Endothelial cell of umbilical vein (primary cell): ENCODE measurements at regions of chr20 and their contacts with region 1.

Region 1: DNA sequence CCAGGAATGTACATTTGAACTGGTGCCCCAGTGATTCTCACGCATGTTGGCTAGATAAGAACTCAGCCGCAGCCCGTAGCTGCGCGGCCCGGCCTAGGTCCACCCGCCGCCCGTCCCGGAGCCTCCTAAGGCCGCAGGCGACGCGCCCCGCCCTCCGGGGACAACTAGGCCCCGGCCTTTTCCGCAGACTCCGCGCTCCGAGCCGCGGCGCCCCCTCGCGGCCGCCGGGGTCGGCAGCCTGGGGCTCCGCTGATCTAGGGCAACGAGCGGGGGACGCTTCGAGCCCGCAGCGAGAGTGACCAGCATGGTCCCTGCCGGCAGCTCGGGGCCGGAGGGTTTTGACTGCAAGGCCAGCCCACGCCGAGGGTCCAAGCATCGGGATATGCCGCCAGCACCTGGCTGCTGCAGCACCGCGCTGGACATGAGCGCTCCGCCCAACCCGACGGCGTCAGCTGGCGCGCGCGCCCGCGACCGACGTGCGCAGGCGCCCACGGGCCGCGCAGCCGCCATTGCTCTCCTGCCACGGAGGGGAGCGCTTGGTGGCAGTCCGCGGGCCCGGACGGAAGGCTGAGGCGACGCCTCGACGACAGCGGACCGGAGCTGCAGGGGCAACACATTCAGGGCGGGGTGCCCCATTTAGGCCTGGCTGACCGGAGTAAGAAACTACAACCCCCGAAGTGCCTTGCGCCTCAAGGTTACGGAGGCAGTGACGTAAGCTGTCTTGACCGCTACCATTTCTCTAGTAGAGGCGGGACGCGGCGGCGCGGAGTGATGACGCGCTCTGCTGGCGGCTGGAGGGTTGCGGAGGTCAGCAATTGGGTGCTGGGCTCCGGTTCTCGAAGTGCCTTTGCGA is at the start of gene AP5S1:
- DNase-seq: peak; percentile 96
- H3K4me3 ChIP-seq: peak within 1 kb of the TSS; percentile 50 to 86 (median 55)
- H3K27ac ChIP-seq: peak within 1 kb of the TSS; percentile 84
- H3K4me1 ChIP-seq: peaks cover 7% of the 10 kb centered on the region
- H3K27me3 ChIP-seq: no peaks in the 10 kb centered on the region
- CTCF ChIP-seq: peak; percentile 92 to 100
- POLR2A ChIP-seq: peak; percentile 81
- total RNA-seq, gene AP5S1: 19.2 and 22.0 TPM in 2 replicates

Region 2: GRCh38 chr20:3727401-3728021 is 92.8 kb before region 1 on chr20:
- CTCF ChIA-PET with region 1: no interaction called
- POLR2A ChIA-PET with region 1: no interaction called
- dilution Hi-C with region 1: no loop called
- intact Hi-C with region 1: no loop called
- DNase-seq: no peak
- H3K4me3 ChIP-seq: no peak overlapping the region
- H3K27ac ChIP-seq: no peak overlapping the region
- H3K4me1 ChIP-seq: no peaks in the 10 kb centered on the region
- H3K27me3 ChIP-seq: peaks cover 7 to 10% of the 10 kb centered on the region in 2 experiments
- CTCF ChIP-seq: no peak
- POLR2A ChIP-seq: no peak

Region 3: GRCh38 chr20:3753098-3753980 is 66.9 kb before region 1 on chr20:
- CTCF ChIA-PET with region 1: interaction called, 6 read pairs
- POLR2A ChIA-PET with region 1: no interaction called
- dilution Hi-C with region 1: no loop called
- intact Hi-C with region 1: loop called (anchors 1 kb)
- DNase-seq: peak; percentile 66
- H3K4me3 ChIP-seq: no peak overlapping the region
- H3K27ac ChIP-seq: no peak overlapping the region
- H3K4me1 ChIP-seq: no peaks in the 10 kb centered on the region
- H3K27me3 ChIP-seq: no peaks in the 10 kb centered on the region
- CTCF ChIP-seq: peak; percentile 79 to 89
- POLR2A ChIP-seq: peak; percentile 55

Region 4: GRCh38 chr20:3781153-3781910 is 38.9 kb before region 1 on chr20 and contains the start of gene SPEF1:
- CTCF ChIA-PET with region 1: interaction called, 214 read pairs
- POLR2A ChIA-PET with region 1: no interaction called
- dilution Hi-C with region 1: no loop called
- intact Hi-C with region 1: loop called (anchors 1 kb)
- DNase-seq: peak; percentile 90
- H3K4me3 ChIP-seq: peak within 1 kb of the TSS in 2 of 3 experiments; percentile 3 to 17
- H3K27ac ChIP-seq: no peak within 1 kb of the TSS
- H3K4me1 ChIP-seq: peaks cover 28% of the 10 kb centered on the region
- H3K27me3 ChIP-seq: peaks cover 8 to 19% of the 10 kb centered on the region in 2 experiments
- CTCF ChIP-seq: peak; percentile 42 to 56
- POLR2A ChIP-seq: peak; percentile 68
- total RNA-seq, gene SPEF1: 0.32 and 0.44 TPM in 2 replicates

Region 5: DNA sequence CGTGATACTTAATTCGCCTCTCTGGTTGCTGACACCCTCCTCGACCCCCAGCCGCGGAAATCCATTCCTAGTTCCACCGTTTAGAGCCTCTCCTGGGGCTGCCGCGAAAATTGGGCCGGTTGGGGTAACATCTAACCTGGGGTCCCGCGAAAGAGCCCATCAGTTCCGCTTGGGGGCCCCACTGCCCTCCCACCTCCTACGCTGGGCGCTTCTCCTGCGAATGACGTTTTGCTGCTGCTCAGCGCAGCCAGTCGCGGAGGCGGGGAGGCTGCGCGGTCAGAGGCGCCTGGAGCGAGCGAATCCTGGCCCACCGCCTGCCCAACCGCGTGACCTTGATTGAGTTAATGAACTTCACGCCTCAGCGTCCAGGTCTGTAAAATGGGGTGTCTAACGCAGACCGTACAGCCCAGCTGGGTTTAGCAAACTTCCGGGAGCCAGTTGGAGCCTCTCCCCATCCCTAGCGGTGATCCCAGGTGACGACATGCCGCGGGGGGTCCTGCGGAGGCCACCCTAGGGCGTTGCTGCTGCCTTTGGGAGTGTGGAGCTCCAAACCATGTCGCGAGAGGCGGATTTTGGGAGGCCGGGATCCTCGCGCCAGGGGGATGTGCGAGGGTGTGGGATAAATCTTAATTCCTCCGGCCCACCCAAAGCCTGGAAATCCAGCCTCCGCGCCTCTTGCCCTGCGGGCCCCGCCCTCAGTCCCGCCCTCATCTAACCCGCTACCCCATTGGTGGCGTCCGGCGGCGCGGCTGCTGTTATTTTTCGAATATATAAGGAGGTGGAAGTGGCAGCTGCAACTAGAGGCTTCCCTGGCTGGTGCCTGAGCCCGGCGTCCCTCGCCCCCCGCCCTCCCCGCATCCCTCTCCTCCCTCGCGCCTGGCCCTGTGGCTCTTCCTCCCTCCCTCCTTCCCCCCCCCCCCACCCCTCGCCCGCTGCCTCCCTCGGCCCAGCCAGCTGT is 24.5 kb before region 1 on chr20 and contains the start of gene CDC25B:
- CTCF ChIA-PET with region 1: interaction called, 29 read pairs
- POLR2A ChIA-PET with region 1: interaction called, 3 read pairs
- dilution Hi-C with region 1: no loop called
- intact Hi-C with region 1: loop called (anchors 1 kb)
- DNase-seq: peak; percentile 88
- H3K4me3 ChIP-seq: peak within 1 kb of the TSS; percentile 66 to 90 (median 70)
- H3K27ac ChIP-seq: peak within 1 kb of the TSS; percentile 84
- H3K4me1 ChIP-seq: peaks cover 20% of the 10 kb centered on the region
- H3K27me3 ChIP-seq: no peaks in the 10 kb centered on the region
- CTCF ChIP-seq: peak in 1 of 2 donors; percentile 49
- POLR2A ChIP-seq: peak; percentile 61
- total RNA-seq, gene CDC25B: 62.2 and 76.5 TPM in 2 replicates

Region 6: DNA sequence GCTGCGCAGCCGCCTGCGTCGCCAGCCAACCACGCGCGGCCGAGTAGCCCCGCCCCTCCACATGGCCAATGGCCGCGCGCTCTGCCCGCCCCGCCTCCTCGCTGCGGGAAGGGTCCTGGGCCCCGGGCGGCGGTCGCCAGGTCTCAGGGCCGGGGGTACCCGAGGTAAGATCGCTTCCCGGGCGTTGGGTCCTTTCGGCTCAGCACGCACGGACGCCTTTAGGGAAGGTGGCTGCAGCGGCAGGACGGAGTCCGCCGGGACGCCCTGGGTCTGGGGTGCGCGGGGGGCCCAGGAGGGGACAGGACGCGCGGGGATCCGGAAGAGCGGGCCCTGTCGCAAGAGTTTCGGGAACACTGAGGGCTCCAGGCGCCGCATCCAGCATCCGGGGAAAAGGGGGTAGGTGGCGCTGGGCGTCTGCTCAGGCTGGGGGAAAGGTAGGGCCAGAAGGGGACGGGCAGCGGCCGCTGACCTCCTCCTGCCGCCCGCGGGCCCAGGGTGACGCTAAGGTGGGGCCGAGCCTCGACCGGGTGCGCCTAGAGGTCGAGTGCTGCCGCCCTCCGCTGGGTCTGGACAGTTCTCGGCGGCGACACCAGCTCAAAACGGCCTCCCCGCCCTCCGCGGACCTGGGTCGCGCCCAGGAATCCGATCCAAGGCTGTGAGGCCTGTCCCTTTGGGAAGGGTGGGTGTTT is 26.6 kb after region 1 on chr20 and contains the start of gene MAVS:
- CTCF ChIA-PET with region 1: interaction called, 9 read pairs
- POLR2A ChIA-PET with region 1: interaction called, 4 read pairs
- dilution Hi-C with region 1: no loop called
- intact Hi-C with region 1: loop called (anchors 1 kb)
- DNase-seq: peak; percentile 84
- H3K4me3 ChIP-seq: peak within 1 kb of the TSS; percentile 78 to 92 (median 89)
- H3K27ac ChIP-seq: peak within 1 kb of the TSS; percentile 45
- H3K4me1 ChIP-seq: peaks cover 13% of the 10 kb centered on the region
- H3K27me3 ChIP-seq: no peaks in the 10 kb centered on the region
- CTCF ChIP-seq: no peak
- POLR2A ChIP-seq: peak; percentile 56
- total RNA-seq, gene MAVS: 35.1 and 40.7 TPM in 2 replicates

Region 7: DNA sequence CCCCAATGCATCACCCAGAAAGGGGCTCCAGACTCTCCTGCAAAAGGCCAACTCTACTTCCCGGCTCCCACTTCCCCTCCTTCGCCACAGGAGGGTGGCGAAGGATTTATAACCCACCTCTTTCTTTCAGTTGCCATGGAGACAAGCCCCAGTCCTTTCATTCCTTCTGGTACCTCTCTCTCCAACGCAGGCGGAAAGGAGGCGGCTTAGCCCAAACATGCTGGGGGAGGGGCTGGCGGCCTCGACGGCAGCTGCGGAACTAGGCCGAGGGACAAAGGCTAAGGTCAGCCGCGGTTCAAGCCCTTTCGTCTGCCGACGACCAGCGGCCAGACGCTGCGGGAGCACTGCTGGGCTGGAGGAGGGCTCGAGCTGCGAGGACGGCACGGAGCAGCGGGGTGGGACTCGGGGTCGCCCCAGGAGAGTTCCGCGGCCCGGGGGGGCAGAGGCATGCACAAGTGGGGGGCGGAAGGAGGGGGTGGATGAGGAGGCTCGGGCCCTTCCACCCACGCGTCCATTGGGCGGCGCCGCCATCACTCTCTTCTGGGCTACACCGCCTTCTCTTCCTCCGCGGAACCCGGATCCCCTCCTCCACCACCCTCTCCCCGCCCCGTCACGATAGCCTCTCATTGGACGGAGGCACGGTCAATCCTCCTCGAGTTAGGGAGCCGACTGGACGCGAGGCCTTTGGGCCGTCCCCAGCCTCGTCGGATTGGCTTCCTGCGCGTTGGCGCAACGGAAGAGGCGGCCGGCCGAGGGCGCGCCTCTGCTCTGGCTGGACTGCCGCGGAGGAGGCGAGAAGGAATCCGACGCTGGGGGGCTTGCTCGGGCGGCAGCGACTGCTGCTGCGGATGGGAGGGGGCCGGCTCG is 68.6 kb after region 1 on chr20 and contains the start of gene PANK2:
- CTCF ChIA-PET with region 1: no interaction called
- POLR2A ChIA-PET with region 1: no interaction called
- dilution Hi-C with region 1: no loop called
- intact Hi-C with region 1: loop called (anchors 2 kb)
- DNase-seq: peak; percentile 99
- H3K4me3 ChIP-seq: peak within 1 kb of the TSS; percentile 87 to 100 (median 99)
- H3K27ac ChIP-seq: peak within 1 kb of the TSS; percentile 93
- H3K4me1 ChIP-seq: peaks cover 40% of the 10 kb centered on the region
- H3K27me3 ChIP-seq: no peaks in the 10 kb centered on the region
- CTCF ChIP-seq: peak; percentile 28 to 46
- POLR2A ChIP-seq: peak; percentile 92
- total RNA-seq, gene PANK2: 54.3 and 55.3 TPM in 2 replicates

Region 8: GRCh38 chr20:3924304-3925112 is 104.2 kb after region 1 on chr20:
- CTCF ChIA-PET with region 1: no interaction called
- POLR2A ChIA-PET with region 1: no interaction called
- dilution Hi-C with region 1: no loop called
- intact Hi-C with region 1: no loop called
- DNase-seq: no peak
- H3K4me3 ChIP-seq: no peak overlapping the region
- H3K27ac ChIP-seq: no peak overlapping the region
- H3K4me1 ChIP-seq: no peaks in the 10 kb centered on the region
- H3K27me3 ChIP-seq: no peaks in the 10 kb centered on the region
- CTCF ChIP-seq: no peak
- POLR2A ChIP-seq: no peak